Head of caudate nucleus (tissue), 42 donors: ENCODE measurements at regions of chr11 and their contacts with region 1.

Region 1: DNA sequence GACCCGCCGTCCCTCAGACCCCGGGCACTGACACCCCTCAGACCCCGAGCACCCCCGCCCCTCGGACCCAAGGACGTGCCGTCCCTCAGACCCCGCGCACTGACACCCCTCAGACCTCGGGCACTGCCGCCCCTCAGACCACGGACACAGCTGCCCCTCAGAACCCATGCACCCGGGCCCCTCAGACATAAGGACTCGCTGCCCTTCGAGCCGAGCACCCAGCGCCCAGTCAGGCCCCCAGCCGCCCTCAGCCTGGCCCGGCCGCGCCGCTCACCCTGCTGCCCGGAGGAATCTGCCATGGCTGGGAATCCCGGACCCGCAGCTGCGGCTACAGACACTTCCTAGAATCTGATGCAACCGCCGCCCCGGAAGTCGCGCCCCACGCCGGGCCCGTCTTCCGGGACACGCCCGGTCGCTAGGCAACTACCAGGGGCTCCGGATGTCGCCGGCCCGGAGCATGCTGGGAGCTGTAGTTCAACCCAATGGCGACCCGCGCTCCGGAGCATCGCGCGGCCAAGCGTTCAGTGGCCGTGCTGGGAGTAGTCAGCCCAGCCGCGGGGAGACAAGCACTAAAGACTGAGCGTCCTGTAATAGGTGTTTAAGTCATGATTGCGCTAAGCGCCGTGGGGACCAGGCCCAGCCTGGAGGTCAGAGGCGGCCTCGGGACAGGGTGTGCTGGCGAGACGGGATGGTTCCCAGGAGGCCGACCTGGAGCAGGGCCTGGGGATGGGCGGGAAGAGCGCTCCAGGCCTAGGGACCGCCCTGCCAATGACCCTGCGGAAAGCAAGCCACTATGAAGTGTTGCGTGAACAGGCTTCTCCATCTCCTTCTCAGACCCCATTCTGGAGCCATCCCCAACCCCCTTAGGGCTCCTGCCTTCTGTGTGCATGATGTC is at the start of gene CARS1:
- DNase-seq: peak; percentile 93 to 99 (median 98)

Region 2: DNA sequence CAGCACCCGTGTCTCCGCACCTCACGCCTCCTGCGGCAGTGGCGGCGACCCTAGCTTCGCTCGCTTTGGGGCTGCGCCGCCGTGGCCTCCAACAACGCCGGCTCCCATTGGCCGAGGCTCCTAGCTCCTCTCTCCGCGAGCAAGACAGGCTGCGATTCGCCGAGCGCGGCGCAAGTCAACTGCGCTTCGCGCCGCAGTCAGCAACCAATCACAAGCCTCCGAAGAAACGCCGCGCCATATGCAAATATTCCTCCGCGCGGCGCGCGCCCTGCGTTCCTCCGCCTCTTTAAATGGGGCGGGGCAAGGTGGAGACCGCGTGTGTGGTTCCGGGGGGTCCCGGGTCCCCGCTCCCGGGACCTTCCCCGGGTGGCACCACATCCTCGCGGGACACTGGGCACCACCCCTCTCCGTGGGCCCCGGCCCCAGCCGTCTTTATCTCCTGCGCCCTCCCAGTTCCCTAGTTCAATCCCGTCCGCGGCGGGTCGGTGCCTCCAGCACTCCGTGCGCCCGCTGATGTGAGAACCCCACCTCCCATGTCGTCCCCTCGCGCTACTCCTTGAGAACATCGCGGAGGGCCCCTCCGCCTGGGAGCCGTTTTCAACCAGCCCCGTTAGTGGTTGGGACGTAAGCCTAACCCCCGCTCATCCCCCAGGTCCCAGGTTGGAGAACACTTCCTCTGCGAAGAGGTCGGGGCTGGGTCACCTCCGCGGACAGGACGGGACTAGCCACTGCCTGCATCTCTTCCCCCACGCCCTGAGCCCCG is 64.9 kb before region 1 on chr11 and contains the start of gene NAP1L4:
- intact Hi-C with region 1: loop called (anchors 10 kb)
- DNase-seq: peak; percentile 93 to 99 (median 97)

Region 3: GRCh38 chr11:3188496-3189195 is 131.3 kb after region 1 on chr11:
- intact Hi-C with region 1: no loop called
- DNase-seq: peak in 7 of 42 donors; percentile 4 to 29 (median 7)